IMR-90 (cell line): ENCODE measurements at regions of chr10 and their contacts with region 1.

Region 1: DNA sequence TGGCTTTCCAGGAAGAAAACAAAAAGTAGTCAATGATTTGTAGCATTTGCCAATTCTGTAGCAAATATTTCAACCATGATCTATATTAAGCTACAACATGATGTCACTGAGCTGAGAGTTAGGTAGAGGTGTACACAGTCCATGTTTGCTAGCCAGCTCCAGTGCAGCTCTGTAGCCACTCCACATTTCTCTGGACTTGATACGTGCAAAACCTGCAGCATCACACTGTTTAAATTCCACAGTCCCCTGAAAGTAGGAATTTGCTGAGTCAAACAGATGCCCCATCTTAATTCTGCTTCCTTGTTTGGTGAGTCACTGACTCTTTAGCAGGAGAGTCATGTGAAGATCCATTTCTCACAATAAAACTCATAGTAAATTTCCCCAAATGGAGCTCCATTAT is 89.8 kb upstream of the LRRTM3 start:
- DNase-seq: peak; percentile 81
- ATAC-seq: peak; percentile 89
- H3K4me3 ChIP-seq: no peak overlapping the region
- H3K27ac ChIP-seq: no peak overlapping the region
- H3K4me1 ChIP-seq: no peaks in the 10 kb centered on the region; the same call in 1 of the 2 replicates
- H3K27me3 ChIP-seq: no peaks in the 10 kb centered on the region
- CTCF ChIP-seq: no peak
- POLR2A ChIP-seq: no peak
- RAD21 ChIP-seq: no peak

Region 2: GRCh38 chr10:66783316-66783715 is 52.7 kb before region 1 on chr10:
- CTCF ChIA-PET with region 1: no interaction called
- POLR2A ChIA-PET with region 1: no interaction called
- dilution Hi-C with region 1: no loop called
- in situ Hi-C with region 1: no loop called
- intact Hi-C with region 1: loop called (anchors 5 kb)
- DNase-seq: peak; percentile 56
- ATAC-seq: peak; percentile 48
- H3K4me3 ChIP-seq: no peak overlapping the region
- H3K27ac ChIP-seq: no peak overlapping the region
- H3K4me1 ChIP-seq: no peaks in the 10 kb centered on the region
- H3K27me3 ChIP-seq: no peaks in the 10 kb centered on the region
- CTCF ChIP-seq: no peak
- POLR2A ChIP-seq: no peak
- RAD21 ChIP-seq: no peak